ENCODE measurements at regions of chr6 and their contacts with region 1.

Region 1: DNA sequence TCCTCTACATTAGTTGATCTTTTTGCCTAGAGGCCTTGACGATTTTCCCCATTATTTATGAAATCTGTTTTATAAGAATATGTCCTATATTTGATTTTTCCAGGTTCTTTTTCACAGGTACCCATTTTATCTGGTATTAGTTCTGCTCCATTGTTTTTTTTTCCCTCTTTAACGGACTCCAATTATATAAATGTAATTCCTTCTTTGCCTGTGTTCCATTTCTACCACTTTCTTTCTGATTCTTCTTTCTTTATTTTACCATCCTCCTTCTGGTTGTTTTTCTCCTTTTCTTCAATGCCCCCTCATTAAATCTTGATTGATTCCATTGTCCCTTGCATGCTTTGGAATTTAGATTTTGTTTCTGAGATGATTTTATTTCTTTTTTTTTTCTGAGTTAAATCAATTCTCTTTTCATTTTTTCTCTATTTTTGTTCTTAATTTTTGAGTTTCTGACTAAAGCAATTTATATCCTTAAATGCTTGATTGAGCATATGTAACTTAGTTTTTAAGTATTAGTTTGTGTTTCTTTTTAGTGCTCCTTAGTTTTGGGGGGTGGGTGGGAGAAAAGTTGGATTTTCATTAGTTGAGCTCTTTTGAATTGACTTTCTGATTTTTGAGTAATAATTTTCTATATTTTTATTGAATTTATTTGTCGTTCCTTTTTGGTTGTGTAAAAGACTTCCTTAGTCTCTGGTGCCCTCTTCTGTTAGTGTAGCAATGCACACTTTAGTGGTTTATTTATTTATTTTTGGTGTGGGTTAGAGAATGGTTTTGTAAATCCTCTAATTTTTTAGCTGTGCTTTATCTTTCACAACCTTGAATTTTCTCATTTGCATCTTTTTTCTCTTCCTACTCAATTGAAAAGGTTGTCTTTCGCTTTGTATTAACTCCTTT is 140.8 kb downstream of the FARS2 start:
- DNase-seq: peak; percentile 59
- ATAC-seq: peak; percentile 54
- H3K4me3 ChIP-seq: no peak overlapping the region
- H3K27ac ChIP-seq: no peak overlapping the region
- H3K4me1 ChIP-seq: peaks cover 7% of the 10 kb centered on the region; the same call in 1 of the 2 replicates
- H3K27me3 ChIP-seq: no peaks in the 10 kb centered on the region
- CTCF ChIP-seq: peak; percentile 75

Region 2: GRCh38 chr6:5053038-5053437 is 349.1 kb before region 1 on chr6:
- CTCF ChIA-PET with region 1: no interaction called
- POLR2A ChIA-PET with region 1: no interaction called
- intact Hi-C with region 1: loop called (anchors 2 kb)
- DNase-seq: no peak
- ATAC-seq: no peak
- H3K4me3 ChIP-seq: no peak overlapping the region
- H3K27ac ChIP-seq: no peak overlapping the region
- H3K4me1 ChIP-seq: no peaks in the 10 kb centered on the region
- H3K27me3 ChIP-seq: no peaks in the 10 kb centered on the region
- CTCF ChIP-seq: no peak

Region 3: DNA sequence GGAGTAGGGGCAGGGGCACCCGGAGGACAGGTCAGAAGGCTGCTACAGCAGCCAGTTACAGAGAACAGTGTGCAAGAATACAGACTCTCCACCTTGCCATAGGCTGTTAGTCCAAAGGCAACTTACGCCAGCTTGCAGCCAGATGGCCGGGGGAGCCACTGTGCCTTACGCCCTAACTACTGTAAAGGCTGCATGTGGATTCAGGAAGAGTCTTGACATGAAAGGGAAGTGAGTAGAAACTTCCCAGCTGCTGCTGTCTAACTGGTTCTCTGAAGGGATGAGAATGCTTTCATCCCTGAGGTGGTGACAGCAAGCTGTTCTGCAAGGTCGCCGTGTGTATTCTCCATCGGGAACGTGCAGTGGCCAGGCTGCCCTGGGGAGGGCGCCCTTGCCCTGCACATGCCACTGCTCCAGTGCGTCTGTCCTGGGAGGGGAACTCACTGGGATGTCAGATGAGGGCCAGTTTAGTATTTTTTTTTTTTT is 187.5 kb before region 1 on chr6:
- CTCF ChIA-PET with region 1: interaction called, 6 read pairs
- POLR2A ChIA-PET with region 1: no interaction called
- intact Hi-C with region 1: loop called (anchors 2 kb)
- DNase-seq: peak; percentile 58
- ATAC-seq: peak; percentile 69
- H3K4me3 ChIP-seq: no peak overlapping the region
- H3K27ac ChIP-seq: peak overlapping the region; percentile 16
- H3K4me1 ChIP-seq: peaks cover 17% of the 10 kb centered on the region
- H3K27me3 ChIP-seq: no peaks in the 10 kb centered on the region
- CTCF ChIP-seq: peak; percentile 87

Region 4: DNA sequence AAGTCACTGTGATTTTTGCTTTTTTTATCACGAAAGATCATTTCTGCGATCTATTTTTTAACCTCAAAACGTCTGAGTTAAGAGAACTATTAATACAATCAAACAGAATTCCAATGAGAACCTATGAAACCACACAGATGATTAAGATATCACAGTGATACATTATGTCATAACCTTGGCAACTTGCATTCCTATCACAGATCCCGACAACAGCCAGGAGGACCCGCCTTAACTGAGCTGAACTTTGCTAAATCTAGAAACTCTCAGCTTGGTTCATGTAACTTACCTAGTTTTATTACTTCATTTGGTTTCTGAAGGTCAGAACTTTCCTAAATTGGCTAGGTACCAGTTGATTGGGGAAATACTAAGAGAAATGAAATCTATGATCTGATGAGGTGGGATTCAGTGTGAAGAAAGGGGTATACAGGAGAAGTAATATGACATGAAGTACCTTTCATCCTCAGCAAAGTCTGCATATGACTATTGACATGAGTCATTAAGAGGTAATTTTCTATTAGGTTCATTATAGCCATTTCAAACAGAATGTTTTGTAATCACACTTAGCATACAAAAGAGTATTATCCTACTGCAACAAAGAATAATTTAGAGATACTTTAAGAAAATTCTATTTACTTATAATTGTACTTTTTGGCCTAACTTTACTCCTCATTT is 152.5 kb before region 1 on chr6:
- CTCF ChIA-PET with region 1: no interaction called
- POLR2A ChIA-PET with region 1: no interaction called
- intact Hi-C with region 1: no loop called
- DNase-seq: peak; percentile 42
- ATAC-seq: 0 out of 2 replicates have a peak, but pooled peaks have one; percentile 30
- H3K4me3 ChIP-seq: peak overlapping the region; percentile 6; the same call in 1 of the 2 replicates
- H3K27ac ChIP-seq: peak overlapping the region; percentile 55
- H3K4me1 ChIP-seq: peaks cover 31% of the 10 kb centered on the region
- H3K27me3 ChIP-seq: no peaks in the 10 kb centered on the region
- CTCF ChIP-seq: no peak

Region 5: DNA sequence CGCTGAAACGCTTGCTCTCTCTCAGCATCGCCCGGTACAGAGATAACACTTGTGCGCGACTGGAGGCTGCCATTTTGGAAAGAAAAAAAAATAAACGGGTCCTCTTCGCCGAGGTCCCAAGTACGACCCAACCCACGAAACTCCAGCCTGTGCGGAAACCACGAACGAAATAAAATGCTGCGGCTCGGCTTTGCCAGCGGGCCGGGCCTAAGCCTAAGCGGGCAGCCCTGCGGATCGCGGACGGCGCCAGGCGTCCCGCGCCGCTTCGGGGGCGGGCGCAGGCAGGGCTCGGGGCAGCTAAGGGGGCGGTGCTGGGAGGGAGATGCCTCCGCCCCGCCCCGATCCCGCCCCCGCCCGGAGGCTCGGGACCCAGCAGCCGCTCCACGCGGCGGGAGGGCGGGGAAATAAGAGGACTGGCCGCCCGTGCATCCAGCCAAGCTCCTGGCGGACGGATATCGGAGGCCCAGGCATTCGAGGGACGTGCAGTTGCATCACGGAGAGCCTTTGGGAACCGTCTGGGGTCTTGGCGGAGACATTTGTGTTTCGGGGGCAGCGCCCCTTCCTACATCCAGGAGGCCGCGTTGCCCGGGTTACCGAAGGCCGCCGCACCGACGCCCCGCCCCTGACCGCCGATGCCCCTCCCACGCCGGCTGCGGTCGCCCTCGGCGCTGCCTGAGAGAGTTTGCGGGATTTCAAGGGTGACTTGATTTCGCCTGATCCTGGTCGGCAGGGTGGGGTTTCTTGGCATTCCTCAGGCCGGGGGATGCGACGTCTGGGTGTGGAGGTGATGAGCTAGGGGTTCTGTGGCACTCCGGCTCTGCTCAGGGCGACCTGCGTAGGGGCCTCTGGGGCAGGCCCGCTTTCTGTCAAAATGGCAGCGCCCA is 141.2 kb before region 1 on chr6 and contains the starts of genes FARS2 and LYRM4:
- CTCF ChIA-PET with region 1: no interaction called
- POLR2A ChIA-PET with region 1: no interaction called
- intact Hi-C with region 1: loop called (anchors 5 kb)
- DNase-seq: peak; percentile 85
- ATAC-seq: peak; percentile 80
- H3K4me3 ChIP-seq: peak within 1 kb of the TSS; percentile 96
- H3K27ac ChIP-seq: peak within 1 kb of the TSS; percentile 86
- H3K4me1 ChIP-seq: peaks cover 15% of the 10 kb centered on the region
- H3K27me3 ChIP-seq: no peaks in the 10 kb centered on the region
- CTCF ChIP-seq: no peak
- total RNA-seq, gene FARS2: 18.4 and 23.0 TPM in 2 replicates
- total RNA-seq, gene LYRM4: 18.6 and 27.7 TPM in 2 replicates

Measured in PC-3 (cell line).